ENCODE measurements at regions of chr12 and their contacts with region 1.

Region 1: DNA sequence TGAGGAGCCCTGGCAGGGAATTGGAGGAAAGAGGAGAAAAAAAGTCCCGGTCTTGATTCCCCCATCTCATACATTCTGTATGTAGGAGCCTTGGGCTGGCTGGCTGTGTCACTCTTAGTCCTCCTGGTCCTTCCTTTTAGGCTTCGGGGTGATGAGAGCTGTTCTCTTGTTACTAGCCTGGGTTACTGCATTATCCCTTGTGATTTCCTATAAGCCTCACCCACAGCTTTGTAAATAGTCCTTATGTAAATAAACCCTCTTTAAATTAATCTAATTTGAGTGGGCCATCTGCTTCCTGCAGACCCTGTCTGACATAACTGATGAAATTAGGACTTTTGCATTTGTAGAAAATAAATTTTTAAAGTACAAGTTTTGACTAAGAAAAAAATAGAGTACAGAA is 19.2 kb downstream of the DNM1L start:
- DNase-seq: no peak
- ATAC-seq: no peak
- H3K4me3 ChIP-seq: no peak overlapping the region
- H3K27ac ChIP-seq: no peak overlapping the region
- H3K4me1 ChIP-seq: no peaks in the 10 kb centered on the region
- H3K27me3 ChIP-seq: no peaks in the 10 kb centered on the region
- CTCF ChIP-seq: no peak

Region 2: GRCh38 chr12:31819427-31819826 is 878.9 kb before region 1 on chr12:
- CTCF ChIA-PET with region 1: interaction called, 11 read pairs
- POLR2A ChIA-PET with region 1: no interaction called
- in situ Hi-C with region 1: no loop called
- intact Hi-C with region 1: no loop called
- DNase-seq: no peak
- ATAC-seq: no peak; the same call in 1 of the 2 replicates
- H3K4me3 ChIP-seq: no peak overlapping the region
- H3K27ac ChIP-seq: no peak overlapping the region
- H3K4me1 ChIP-seq: no peaks in the 10 kb centered on the region
- H3K27me3 ChIP-seq: no peaks in the 10 kb centered on the region
- CTCF ChIP-seq: no peak

Region 3: GRCh38 chr12:32494656-32495055 is 203.6 kb before region 1 on chr12:
- CTCF ChIA-PET with region 1: no interaction called
- POLR2A ChIA-PET with region 1: no interaction called
- in situ Hi-C with region 1: no loop called
- intact Hi-C with region 1: no loop called
- DNase-seq: no peak
- ATAC-seq: no peak
- H3K4me3 ChIP-seq: no peak overlapping the region
- H3K27ac ChIP-seq: no peak overlapping the region
- H3K4me1 ChIP-seq: no peaks in the 10 kb centered on the region
- H3K27me3 ChIP-seq: no peaks in the 10 kb centered on the region
- CTCF ChIP-seq: no peak

Region 4: DNA sequence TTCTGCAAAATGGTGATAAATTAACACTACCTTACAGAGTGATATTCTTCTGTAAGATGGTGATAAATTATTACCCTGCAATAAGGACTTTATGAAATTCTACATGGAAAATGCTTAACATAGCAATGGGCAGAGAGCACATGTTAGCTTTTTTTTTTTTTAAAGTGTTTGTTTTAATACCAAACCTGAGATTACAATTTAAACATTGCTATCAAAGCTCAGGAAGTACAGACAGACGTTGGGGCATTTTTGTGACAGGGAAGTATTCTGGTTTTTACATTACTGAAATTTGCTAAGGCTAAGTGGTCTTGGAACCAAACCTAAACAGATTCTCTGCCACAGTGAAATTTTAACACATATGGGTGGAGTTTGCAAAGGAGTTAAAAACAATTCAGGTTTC is 165.9 kb before region 1 on chr12:
- CTCF ChIA-PET with region 1: no interaction called
- POLR2A ChIA-PET with region 1: no interaction called
- in situ Hi-C with region 1: no loop called
- intact Hi-C with region 1: no loop called
- DNase-seq: no peak
- ATAC-seq: no peak
- H3K4me3 ChIP-seq: no peak overlapping the region
- H3K27ac ChIP-seq: no peak overlapping the region
- H3K4me1 ChIP-seq: peaks cover 15% of the 10 kb centered on the region
- H3K27me3 ChIP-seq: no peaks in the 10 kb centered on the region; the same call in 1 of the 2 replicates
- CTCF ChIP-seq: no peak

Region 5: DNA sequence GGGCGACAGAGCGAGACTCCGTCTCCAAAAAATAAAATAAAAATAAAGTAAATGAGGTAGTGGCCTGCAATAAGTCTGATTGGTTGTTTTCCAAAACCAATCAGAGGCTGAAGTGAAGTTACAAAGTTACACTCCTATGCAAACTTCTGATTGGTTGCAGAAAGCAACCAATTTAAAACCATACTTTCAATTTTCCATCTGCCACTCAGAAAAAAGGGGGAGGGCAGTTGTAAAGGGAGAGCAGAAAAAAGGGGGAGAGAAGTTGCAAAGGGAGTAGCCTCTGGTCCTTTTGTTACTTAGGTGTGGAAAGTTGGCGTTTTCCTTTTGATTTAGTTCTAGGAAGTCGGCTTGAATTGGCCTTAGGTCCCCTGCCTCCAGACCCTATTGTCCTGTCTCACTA is 31.8 kb before region 1 on chr12:
- CTCF ChIA-PET with region 1: no interaction called
- POLR2A ChIA-PET with region 1: no interaction called
- in situ Hi-C with region 1: no loop called
- intact Hi-C with region 1: no loop called
- DNase-seq: no peak
- ATAC-seq: peak; percentile 56
- H3K4me3 ChIP-seq: peak overlapping the region; percentile 25 to 49
- H3K27ac ChIP-seq: 0 out of 2 replicates have a peak overlapping the region, but pooled peaks have one; percentile 9
- H3K4me1 ChIP-seq: no peaks in the 10 kb centered on the region
- H3K27me3 ChIP-seq: no peaks in the 10 kb centered on the region
- CTCF ChIP-seq: no peak